Natural killer cell (primary cell): ENCODE measurements at regions of chr12 and their contacts with region 1.

Region 1: GRCh38 chr12:3658327-3659163 is 94.4 kb downstream of the CRACR2A start:
- DNase-seq: peak in 1 of 2 donors; percentile 62
- ATAC-seq: peak in 1 of 3 donors; percentile 38
- H3K4me3 ChIP-seq: no peak overlapping the region
- H3K4me3 Mint-ChIP-seq: no peak overlapping the region
- H3K27ac ChIP-seq: no peak overlapping the region
- H3K27ac Mint-ChIP-seq: peak overlapping the region in 1 of 2 donors; percentile 10
- H3K4me1 ChIP-seq: no peaks in the 10 kb centered on the region
- H3K4me1 Mint-ChIP-seq: peaks cover 0 to 5% of the 10 kb centered on the region in 2 donors
- H3K27me3 ChIP-seq: no peaks in the 10 kb centered on the region
- H3K27me3 Mint-ChIP-seq: no peaks in the 10 kb centered on the region
- CTCF ChIP-seq: peak; percentile 40

Region 2: GRCh38 chr12:3712209-3712992 is 53.9 kb after region 1 on chr12:
- intact Hi-C with region 1: no loop called
- DNase-seq: no peak
- ATAC-seq: no peak
- H3K4me3 ChIP-seq: no peak overlapping the region
- H3K4me3 Mint-ChIP-seq: no peak overlapping the region
- H3K27ac ChIP-seq: no peak overlapping the region
- H3K27ac Mint-ChIP-seq: peak overlapping the region; percentile 14 to 45
- H3K4me1 ChIP-seq: no peaks in the 10 kb centered on the region
- H3K4me1 Mint-ChIP-seq: peaks cover 22 to 33% of the 10 kb centered on the region in 2 donors
- H3K27me3 ChIP-seq: no peaks in the 10 kb centered on the region
- H3K27me3 Mint-ChIP-seq: no peaks in the 10 kb centered on the region
- CTCF ChIP-seq: no peak

Region 3: GRCh38 chr12:3777206-3777809 is 118.8 kb after region 1 on chr12:
- intact Hi-C with region 1: loop called (anchors 1 kb)
- DNase-seq: peak in 1 of 2 donors; percentile 68
- ATAC-seq: peak in 2 of 3 donors; percentile 55 to 66
- H3K4me3 ChIP-seq: no peak overlapping the region
- H3K4me3 Mint-ChIP-seq: no peak overlapping the region
- H3K27ac ChIP-seq: no peak overlapping the region
- H3K27ac Mint-ChIP-seq: no peak overlapping the region
- H3K4me1 ChIP-seq: no peaks in the 10 kb centered on the region
- H3K4me1 Mint-ChIP-seq: no peaks in the 10 kb centered on the region
- H3K27me3 ChIP-seq: no peaks in the 10 kb centered on the region
- H3K27me3 Mint-ChIP-seq: peaks cover 0 to 2% of the 10 kb centered on the region in 2 donors
- CTCF ChIP-seq: peak; percentile 70

Region 4: DNA sequence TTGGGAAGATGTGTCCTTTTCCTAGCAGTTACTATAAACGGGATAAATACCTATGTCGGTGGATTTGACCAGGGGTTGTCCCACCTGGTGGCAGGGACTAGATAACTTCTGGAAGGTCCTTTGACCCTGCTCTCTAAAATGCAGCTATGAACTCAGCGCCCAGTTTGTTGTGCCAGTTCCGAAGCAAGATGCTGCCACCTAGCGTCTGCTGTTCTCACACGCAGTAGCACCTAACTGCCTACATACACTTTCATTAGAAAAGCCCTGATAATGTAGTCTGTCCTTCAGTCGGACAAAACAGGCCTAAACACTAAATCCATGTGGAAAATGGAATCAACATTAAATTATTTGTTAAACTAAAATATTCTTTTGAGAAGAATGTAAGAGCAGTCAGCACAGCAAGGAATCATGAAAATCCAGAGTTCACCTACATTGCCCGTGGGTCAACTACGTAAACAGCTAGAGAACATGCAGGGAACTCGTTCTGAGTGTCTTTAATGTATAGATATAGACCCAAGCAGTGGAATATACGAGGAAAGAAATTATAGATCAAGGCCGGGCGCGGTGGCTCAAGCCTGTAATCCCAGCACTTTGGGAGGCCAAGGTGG is 145.4 kb after region 1 on chr12:
- intact Hi-C with region 1: loop called (anchors 1 kb)
- DNase-seq: peak; percentile 39 to 85
- ATAC-seq: peak; percentile 67 to 86 (median 78)
- H3K4me3 ChIP-seq: no peak overlapping the region
- H3K4me3 Mint-ChIP-seq: no peak overlapping the region
- H3K27ac ChIP-seq: no peak overlapping the region
- H3K27ac Mint-ChIP-seq: no peak overlapping the region
- H3K4me1 ChIP-seq: no peaks in the 10 kb centered on the region
- H3K4me1 Mint-ChIP-seq: peaks cover 7 to 11% of the 10 kb centered on the region in 2 donors
- H3K27me3 ChIP-seq: no peaks in the 10 kb centered on the region
- H3K27me3 Mint-ChIP-seq: no peaks in the 10 kb centered on the region
- CTCF ChIP-seq: peak; percentile 80